ENCODE measurements at regions of chr20 and their contacts with region 1.

Region 1: GRCh38 chr20:53578492-53579222 is 15.0 kb downstream of the ZNF217 start:
- DNase-seq: peak; percentile 75
- H3K4me3 ChIP-seq: peak overlapping the region in 1 of 3 experiments; percentile 16
- H3K27ac ChIP-seq: peak overlapping the region; percentile 76
- H3K4me1 ChIP-seq: peaks cover 41% of the 10 kb centered on the region
- H3K27me3 ChIP-seq: no peaks in the 10 kb centered on the region
- CTCF ChIP-seq: peak; percentile 71 to 81

Region 2: GRCh38 chr20:53594068-53595017 is 15.7 kb after region 1 on chr20:
- CTCF ChIA-PET with region 1: interaction called, 3 read pairs
- dilution Hi-C with region 1: no loop called
- in situ Hi-C with region 1: no loop called
- intact Hi-C with region 1: loop called (anchors 2 kb)
- DNase-seq: peak; percentile 85
- H3K4me3 ChIP-seq: peak overlapping the region; percentile 67 to 85 (median 83)
- H3K27ac ChIP-seq: peak overlapping the region; percentile 81
- H3K4me1 ChIP-seq: peaks cover 28% of the 10 kb centered on the region
- H3K27me3 ChIP-seq: no peaks in the 10 kb centered on the region
- CTCF ChIP-seq: no peak

Region 3: GRCh38 chr20:53773792-53774401 is 195.2 kb after region 1 on chr20:
- CTCF ChIA-PET with region 1: no interaction called
- dilution Hi-C with region 1: loop called (anchors 25 kb)
- in situ Hi-C with region 1: no loop called
- intact Hi-C with region 1: loop called (anchors 2 kb)
- DNase-seq: peak; percentile 94
- H3K4me3 ChIP-seq: peak overlapping the region in 1 of 3 experiments; percentile 27
- H3K27ac ChIP-seq: peak overlapping the region; percentile 100
- H3K4me1 ChIP-seq: peaks cover 25% of the 10 kb centered on the region
- H3K27me3 ChIP-seq: no peaks in the 10 kb centered on the region
- CTCF ChIP-seq: no peak

Region 4: DNA sequence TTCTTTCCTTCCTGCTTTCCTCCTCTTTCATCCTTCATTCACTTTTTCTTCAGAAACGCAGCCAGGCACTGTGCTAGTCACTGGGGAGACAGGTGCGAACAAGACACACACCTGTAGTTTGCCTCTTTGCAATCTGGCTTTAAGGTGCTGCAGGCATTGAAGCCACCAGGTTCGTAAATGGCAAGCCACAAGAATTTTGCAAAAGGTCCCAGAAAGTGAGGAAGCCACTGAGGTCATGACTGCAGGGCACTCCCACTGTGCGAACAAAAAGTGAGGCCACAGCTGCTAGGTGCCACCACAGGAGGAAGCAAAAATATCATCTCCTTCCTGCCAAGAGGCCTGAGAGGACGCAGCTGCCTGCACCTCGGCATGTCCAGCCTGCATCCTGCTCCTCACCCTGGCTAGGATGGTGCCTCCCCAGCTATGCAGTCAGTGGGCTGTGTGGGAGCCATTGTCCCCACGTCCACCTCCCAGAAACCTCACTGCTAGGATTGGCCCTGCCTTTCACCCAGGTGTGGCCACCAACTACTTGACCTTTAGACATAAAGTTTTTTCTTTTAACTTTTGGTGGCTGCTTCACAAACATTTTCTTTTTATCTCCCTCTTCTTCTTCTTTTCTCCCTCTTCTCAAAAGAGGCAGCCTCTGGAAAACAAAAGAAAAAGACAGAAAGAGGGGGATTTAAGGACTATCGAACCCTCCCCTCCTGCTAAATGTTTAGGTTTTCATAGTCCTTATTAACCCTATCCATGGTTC is 260.9 kb after region 1 on chr20:
- CTCF ChIA-PET with region 1: no interaction called
- dilution Hi-C with region 1: no loop called
- in situ Hi-C with region 1: no loop called
- intact Hi-C with region 1: no loop called
- DNase-seq: no peak
- H3K4me3 ChIP-seq: no peak overlapping the region
- H3K27ac ChIP-seq: no peak overlapping the region
- H3K4me1 ChIP-seq: no peaks in the 10 kb centered on the region
- H3K27me3 ChIP-seq: no peaks in the 10 kb centered on the region
- CTCF ChIP-seq: no peak

Region 5: DNA sequence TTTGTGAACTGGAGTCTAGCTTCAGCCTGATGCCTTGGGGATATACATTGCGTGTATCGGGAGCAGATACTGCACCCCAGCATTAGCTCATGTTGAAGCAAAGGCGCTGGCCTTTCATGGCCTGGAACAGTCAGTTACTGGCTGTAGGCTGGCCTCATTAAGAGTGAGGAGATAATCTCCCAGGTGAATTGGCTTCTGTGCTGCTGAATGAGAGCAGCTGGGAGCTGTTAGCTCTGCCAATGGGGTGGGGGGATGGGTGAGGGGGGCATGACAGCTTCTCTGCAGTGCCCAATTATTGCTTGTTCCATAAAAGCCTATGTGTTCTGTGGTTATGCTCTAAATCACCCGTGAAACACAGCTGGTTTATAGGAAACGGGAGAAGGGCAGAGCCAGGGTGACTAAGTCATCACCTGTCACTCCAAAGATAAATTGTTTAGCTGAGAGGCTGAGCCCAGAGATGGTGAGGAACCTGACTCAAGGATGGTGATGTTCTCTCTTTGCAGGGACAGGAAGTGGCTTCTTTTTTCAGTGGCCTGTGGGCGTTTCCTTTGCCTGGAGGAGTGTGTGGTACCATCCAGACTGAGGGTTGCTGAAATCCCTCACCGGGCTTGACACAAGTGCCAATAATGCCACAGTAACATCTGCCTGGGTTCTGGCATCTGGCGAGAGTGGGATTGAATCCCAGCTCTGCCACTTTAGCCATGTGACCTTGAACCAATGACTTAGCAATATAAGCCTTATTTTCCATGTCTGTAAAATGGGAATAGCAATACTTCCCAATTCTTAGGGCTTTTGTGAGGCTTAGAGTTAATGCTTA is 320.9 kb after region 1 on chr20:
- CTCF ChIA-PET with region 1: no interaction called
- dilution Hi-C with region 1: loop called (anchors 10 kb)
- in situ Hi-C with region 1: no loop called
- intact Hi-C with region 1: no loop called
- DNase-seq: peak; percentile 96
- H3K4me3 ChIP-seq: no peak overlapping the region
- H3K27ac ChIP-seq: peak overlapping the region; percentile 87
- H3K4me1 ChIP-seq: peaks cover 64% of the 10 kb centered on the region
- H3K27me3 ChIP-seq: no peaks in the 10 kb centered on the region
- CTCF ChIP-seq: no peak

Region 6: GRCh38 chr20:53926428-53927028 is 347.9 kb after region 1 on chr20:
- CTCF ChIA-PET with region 1: no interaction called
- dilution Hi-C with region 1: no loop called
- in situ Hi-C with region 1: loop called in 1 of 2 experiments (anchors 5 kb)
- intact Hi-C with region 1: no loop called
- DNase-seq: peak; percentile 99
- H3K4me3 ChIP-seq: no peak overlapping the region
- H3K27ac ChIP-seq: peak overlapping the region; percentile 90
- H3K4me1 ChIP-seq: peaks cover 30% of the 10 kb centered on the region
- H3K27me3 ChIP-seq: no peaks in the 10 kb centered on the region
- CTCF ChIP-seq: no peak

Region 7: GRCh38 chr20:54199721-54200176 is 621.1 kb after region 1 on chr20:
- CTCF ChIA-PET with region 1: no interaction called
- dilution Hi-C with region 1: no loop called
- in situ Hi-C with region 1: loop called in 1 of 2 experiments (anchors 25 kb)
- intact Hi-C with region 1: loop called (anchors 2 kb)
- DNase-seq: peak; percentile 70
- H3K4me3 ChIP-seq: no peak overlapping the region
- H3K27ac ChIP-seq: no peak overlapping the region
- H3K4me1 ChIP-seq: peaks cover 17% of the 10 kb centered on the region
- H3K27me3 ChIP-seq: no peaks in the 10 kb centered on the region
- CTCF ChIP-seq: peak; percentile 92 to 97

Measured in mammary epithelial cell (primary cell).